ENCODE measurements at regions of chr4 and their contacts with region 1.

Region 1: GRCh38 chr4:85798012-85798770 is 323.2 kb downstream of the ARHGAP24 start:
- DNase-seq: no peak
- H3K4me3 ChIP-seq: no peak overlapping the region
- H3K27ac ChIP-seq: no peak overlapping the region
- H3K4me1 ChIP-seq: peaks cover 0 to 9% of the 10 kb centered on the region in 2 experiments; a peak in 1 of 4 replicates
- H3K27me3 ChIP-seq: no peaks in the 10 kb centered on the region
- CTCF ChIP-seq: no peak
- EP300 ChIP-seq: no peak
- RAD21 ChIP-seq: no peak

Region 2: GRCh38 chr4:85761803-85762528 is 36.2 kb before region 1 on chr4:
- CTCF ChIA-PET with region 1: interaction called, 14 read pairs
- POLR2A ChIA-PET with region 1: no interaction called
- DNase-seq: no peak
- H3K4me3 ChIP-seq: no peak overlapping the region; a peak in 1 of 4 replicates
- H3K27ac ChIP-seq: peak overlapping the region; percentile 3 to 88; a peak in 3 of 4 replicates
- H3K4me1 ChIP-seq: peaks cover 6 to 8% of the 10 kb centered on the region in 2 experiments
- H3K27me3 ChIP-seq: no peaks in the 10 kb centered on the region
- CTCF ChIP-seq: no peak
- EP300 ChIP-seq: no peak
- RAD21 ChIP-seq: no peak

Region 3: GRCh38 chr4:85812776-85813175 is 14.6 kb after region 1 on chr4:
- CTCF ChIA-PET with region 1: interaction called, 42 read pairs
- POLR2A ChIA-PET with region 1: no interaction called
- DNase-seq: no peak
- H3K4me3 ChIP-seq: no peak overlapping the region
- H3K27ac ChIP-seq: no peak overlapping the region
- H3K4me1 ChIP-seq: peaks cover 0 to 4% of the 10 kb centered on the region in 2 experiments; a peak in 1 of 4 replicates
- H3K27me3 ChIP-seq: no peaks in the 10 kb centered on the region
- CTCF ChIP-seq: no peak
- EP300 ChIP-seq: no peak
- RAD21 ChIP-seq: no peak

Region 4: DNA sequence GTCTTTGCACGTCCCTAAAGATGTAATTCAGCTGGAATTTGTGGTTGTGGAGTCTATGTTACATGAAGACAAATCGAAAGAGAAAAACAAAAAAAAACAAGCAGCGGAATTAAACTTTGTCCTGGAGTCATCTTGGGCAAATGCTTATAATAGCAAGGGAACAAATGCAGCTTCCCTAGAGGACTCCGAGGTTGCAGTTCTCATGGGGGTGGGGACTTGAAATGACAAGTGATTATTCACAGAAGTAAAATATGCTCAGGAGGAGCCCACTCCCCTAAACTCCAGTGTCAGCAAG is 39.2 kb after region 1 on chr4:
- CTCF ChIA-PET with region 1: no interaction called
- POLR2A ChIA-PET with region 1: no interaction called
- DNase-seq: no peak
- H3K4me3 ChIP-seq: no peak overlapping the region
- H3K27ac ChIP-seq: no peak overlapping the region
- H3K4me1 ChIP-seq: no peaks in the 10 kb centered on the region
- H3K27me3 ChIP-seq: no peaks in the 10 kb centered on the region
- CTCF ChIP-seq: no peak
- EP300 ChIP-seq: no peak
- RAD21 ChIP-seq: no peak

Region 5: GRCh38 chr4:85961887-85962286 is 163.7 kb after region 1 on chr4:
- CTCF ChIA-PET with region 1: interaction called, 19 read pairs
- POLR2A ChIA-PET with region 1: no interaction called
- DNase-seq: no peak
- H3K4me3 ChIP-seq: no peak overlapping the region
- H3K27ac ChIP-seq: no peak overlapping the region
- H3K4me1 ChIP-seq: peaks cover 0 to 2% of the 10 kb centered on the region in 2 experiments; a peak in 1 of 4 replicates
- H3K27me3 ChIP-seq: no peaks in the 10 kb centered on the region
- CTCF ChIP-seq: no peak
- EP300 ChIP-seq: no peak
- RAD21 ChIP-seq: no peak

Region 6: GRCh38 chr4:85995361-85995760 is 197.2 kb after region 1 on chr4:
- CTCF ChIA-PET with region 1: interaction called, 19 read pairs
- POLR2A ChIA-PET with region 1: no interaction called
- DNase-seq: no peak
- H3K4me3 ChIP-seq: no peak overlapping the region
- H3K27ac ChIP-seq: no peak overlapping the region
- H3K4me1 ChIP-seq: no peaks in the 10 kb centered on the region; a peak in 2 of 4 replicates
- H3K27me3 ChIP-seq: no peaks in the 10 kb centered on the region
- CTCF ChIP-seq: no peak
- EP300 ChIP-seq: no peak
- RAD21 ChIP-seq: no peak